ENCODE measurements at regions of chr3 and their contacts with region 1.

Region 1: DNA sequence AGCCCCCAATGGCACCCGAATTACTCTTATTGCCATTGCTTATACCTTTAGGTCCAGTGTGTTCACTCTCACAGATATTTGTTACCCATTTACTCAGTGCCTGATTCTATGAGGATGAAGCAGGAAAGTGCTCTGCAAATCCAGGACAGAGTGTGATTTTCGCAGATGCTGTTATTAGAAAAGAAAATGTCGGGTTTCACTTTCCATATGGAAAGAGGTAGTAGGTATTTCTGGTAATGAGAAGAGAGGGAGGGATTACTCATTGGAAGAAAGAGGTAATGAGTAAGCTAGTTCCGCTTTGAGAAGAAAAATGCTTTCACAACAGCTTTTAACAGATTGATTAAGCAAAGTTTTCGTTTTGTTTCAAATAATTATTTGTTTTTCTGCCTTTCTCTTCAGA is 336.3 kb upstream of the CFAP20DC start:
- DNase-seq: no peak
- H3K4me3 Mint-ChIP-seq: no peak overlapping the region
- H3K27ac Mint-ChIP-seq: peak overlapping the region; percentile 89
- H3K4me1 Mint-ChIP-seq: peaks cover 84% of the 10 kb centered on the region
- H3K27me3 Mint-ChIP-seq: no peaks in the 10 kb centered on the region

Region 2: DNA sequence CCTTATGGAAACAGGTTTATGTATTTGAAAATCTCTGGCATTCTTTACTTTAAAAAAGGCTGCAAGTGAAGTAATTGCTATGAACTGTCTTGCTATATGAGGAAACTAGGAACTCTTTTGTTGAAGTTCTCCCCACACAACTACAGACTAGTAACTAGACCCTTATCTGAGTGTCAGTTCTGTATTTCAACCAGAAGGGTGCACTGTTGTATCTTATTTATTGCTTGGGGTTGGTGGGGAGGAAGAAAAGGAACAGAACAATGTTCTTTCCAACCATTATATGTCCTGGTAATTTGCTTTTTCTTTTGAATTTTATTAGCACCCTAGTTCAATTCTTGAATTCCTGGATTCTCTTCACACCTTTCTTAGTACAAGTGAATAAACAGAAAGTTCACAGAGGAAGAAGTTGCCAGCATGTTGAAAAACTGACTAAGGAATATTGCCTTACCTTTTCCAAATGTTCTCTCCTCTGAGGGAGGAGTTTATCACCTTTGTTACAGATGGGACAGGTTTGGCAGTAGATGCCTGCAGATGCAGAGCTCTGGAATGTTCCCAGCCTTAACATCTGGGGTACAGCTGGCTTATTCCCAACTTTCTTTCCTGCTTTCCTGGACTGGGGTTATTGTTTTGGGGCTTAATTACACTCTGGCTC is 173.9 kb before region 1 on chr3:
- intact Hi-C with region 1: loop called (anchors 10 kb)
- DNase-seq: no peak
- H3K4me3 Mint-ChIP-seq: no peak overlapping the region
- H3K27ac Mint-ChIP-seq: no peak overlapping the region
- H3K4me1 Mint-ChIP-seq: no peaks in the 10 kb centered on the region
- H3K27me3 Mint-ChIP-seq: peaks cover 12% of the 10 kb centered on the region

Region 3: GRCh38 chr3:59313365-59313764 is 72.8 kb before region 1 on chr3:
- intact Hi-C with region 1: loop called (anchors 5 kb)
- DNase-seq: peak; percentile 15
- H3K4me3 Mint-ChIP-seq: no peak overlapping the region
- H3K27ac Mint-ChIP-seq: no peak overlapping the region
- H3K4me1 Mint-ChIP-seq: peaks cover 8% of the 10 kb centered on the region
- H3K27me3 Mint-ChIP-seq: peaks cover 3% of the 10 kb centered on the region

Region 4: DNA sequence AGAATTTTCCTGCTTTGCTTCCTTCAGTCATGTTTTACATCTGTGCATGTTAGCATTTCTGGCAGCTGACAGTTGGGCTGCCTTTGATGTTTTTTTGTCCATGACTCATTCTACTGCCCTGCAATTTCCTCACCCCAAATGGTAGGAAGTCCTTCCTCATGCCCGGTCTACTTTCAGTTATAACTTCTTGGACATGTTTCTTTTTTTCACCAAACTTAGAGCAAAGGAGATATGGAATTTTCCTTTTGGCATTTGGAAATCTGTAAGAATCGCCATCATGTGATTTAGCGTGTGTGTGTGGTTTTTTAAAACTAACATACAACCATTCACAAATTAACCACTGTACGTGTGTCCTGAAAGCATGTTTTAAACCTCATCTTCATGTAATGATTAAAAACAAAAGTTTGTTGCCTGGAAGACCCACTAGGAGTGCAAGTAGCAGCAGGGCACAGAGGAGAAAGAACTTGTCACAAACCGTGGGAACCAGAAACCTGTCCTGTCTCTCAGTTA is 94.4 kb after region 1 on chr3:
- intact Hi-C with region 1: loop called (anchors 2 kb)
- DNase-seq: no peak
- H3K4me3 Mint-ChIP-seq: peak overlapping the region; percentile 54
- H3K27ac Mint-ChIP-seq: peak overlapping the region; percentile 78
- H3K4me1 Mint-ChIP-seq: peaks cover 24% of the 10 kb centered on the region
- H3K27me3 Mint-ChIP-seq: no peaks in the 10 kb centered on the region

Region 5: GRCh38 chr3:59783468-59783988 is 397.4 kb after region 1 on chr3:
- intact Hi-C with region 1: loop called (anchors 2 kb)
- DNase-seq: peak; percentile 18
- H3K4me3 Mint-ChIP-seq: no peak overlapping the region
- H3K27ac Mint-ChIP-seq: peak overlapping the region; percentile 43
- H3K4me1 Mint-ChIP-seq: peaks cover 39% of the 10 kb centered on the region
- H3K27me3 Mint-ChIP-seq: no peaks in the 10 kb centered on the region

Region 6: DNA sequence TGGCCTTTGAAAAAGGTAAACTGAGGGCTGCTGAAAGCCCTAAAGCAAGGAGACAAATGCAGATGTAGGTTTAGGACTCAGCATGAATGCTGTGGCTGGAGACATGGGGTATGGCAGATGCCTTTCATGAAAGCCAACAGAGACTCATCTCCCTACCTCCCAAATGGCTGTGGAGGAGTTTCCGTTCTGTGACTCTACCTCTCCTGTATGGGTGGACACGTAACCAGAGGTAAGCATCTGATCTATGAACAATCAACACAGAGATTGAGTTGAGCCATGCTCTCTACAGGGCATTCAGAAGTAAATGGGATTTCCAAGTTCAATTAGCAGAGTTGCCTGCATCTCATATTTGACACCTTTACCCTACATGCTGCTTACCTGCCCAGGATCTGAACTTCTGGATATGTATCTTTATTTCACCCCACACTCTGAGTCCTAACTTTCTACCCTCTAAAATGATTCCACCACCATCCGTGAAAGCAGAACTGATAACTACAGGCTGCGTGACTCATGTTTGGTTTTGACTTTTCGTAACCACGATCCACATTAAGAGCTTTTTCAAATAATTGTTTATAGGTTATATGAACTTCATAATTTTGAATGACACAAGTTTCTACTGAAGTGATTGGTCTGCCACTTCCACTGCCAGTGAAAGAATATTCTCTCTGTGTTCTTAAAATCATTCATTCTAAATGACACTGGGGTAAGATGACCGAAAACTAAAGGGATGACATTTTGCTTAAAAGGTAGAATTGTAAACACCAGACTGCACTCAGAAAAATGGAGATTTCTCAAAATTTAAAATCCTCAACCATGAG is 806.3 kb after region 1 on chr3:
- intact Hi-C with region 1: loop called (anchors 5 kb)
- DNase-seq: no peak
- H3K4me3 Mint-ChIP-seq: peak overlapping the region; percentile 14
- H3K27ac Mint-ChIP-seq: peak overlapping the region; percentile 86
- H3K4me1 Mint-ChIP-seq: peaks cover 52% of the 10 kb centered on the region
- H3K27me3 Mint-ChIP-seq: no peaks in the 10 kb centered on the region

Measured in activated T-helper 2 cell treated with anti-CD3 and anti-CD28 coated beads, Interferon-gamma antibody, Interleukin-2, Interleukin-4, amounts not matched to agents 10 μg/mL and 5 μg/mL and 100 μg/mL, durations not matched to agents 14 hours and 24 hours and 36 hours (primary cell).